ENCODE measurements at regions of chr17 and their contacts with region 1.

Region 1: GRCh38 chr17:45155029-45155428 is 6.6 kb upstream of the HEXIM2 start:
- DNase-seq: no peak
- H3K4me3 ChIP-seq: no peak overlapping the region
- H3K27ac ChIP-seq: no peak overlapping the region
- H3K4me1 ChIP-seq: peaks cover 25% of the 10 kb centered on the region
- CTCF ChIP-seq: no peak

Region 2: DNA sequence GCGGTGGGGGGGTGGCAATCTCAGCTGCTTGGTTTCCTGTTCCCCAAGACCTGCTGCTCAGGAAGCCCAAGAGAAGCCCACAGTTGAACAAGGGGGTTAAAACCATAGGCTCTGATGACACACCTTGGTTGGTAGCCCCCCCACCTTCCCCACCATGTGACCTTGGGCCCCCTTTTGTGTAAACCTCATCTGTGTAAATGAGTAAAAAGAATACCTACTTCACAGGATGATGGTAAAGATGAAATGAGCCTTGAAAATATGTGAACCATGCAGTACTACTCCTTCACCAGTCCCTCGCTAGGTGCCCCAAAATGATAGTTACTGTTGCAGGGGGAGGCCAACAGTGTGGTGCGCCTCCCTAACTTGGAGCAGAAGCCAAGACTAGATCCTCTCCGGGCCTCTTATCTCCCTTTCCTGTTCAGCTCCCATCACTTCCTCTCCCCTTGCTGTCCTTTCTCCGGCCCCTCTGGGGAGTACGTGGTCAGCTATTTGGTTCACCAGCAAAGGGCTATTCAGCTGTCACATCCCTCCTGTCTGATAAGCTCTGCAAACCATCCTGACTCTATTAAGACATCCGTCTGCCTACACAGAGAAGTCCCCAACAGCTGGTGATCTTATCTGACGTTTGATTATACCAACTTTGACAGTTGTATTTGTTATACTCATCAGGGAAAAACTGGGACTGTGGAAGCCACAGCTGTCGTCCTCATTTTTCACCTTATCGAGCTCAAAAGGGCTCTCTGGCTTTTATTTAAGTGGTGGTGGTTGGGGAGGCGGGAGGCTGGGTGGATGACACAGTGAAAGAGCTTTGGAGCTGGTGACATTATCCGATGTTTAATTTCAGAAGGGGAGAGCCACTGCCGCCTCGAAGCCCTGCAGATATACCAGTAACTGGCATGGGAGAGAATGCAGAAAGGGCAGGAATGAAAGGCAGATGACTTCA is 123.5 kb before region 1 on chr17:
- CTCF ChIA-PET with region 1: no interaction called
- POLR2A ChIA-PET with region 1: no interaction called
- intact Hi-C with region 1: no loop called
- DNase-seq: no peak
- H3K4me3 ChIP-seq: no peak overlapping the region
- H3K27ac ChIP-seq: no peak overlapping the region
- H3K4me1 ChIP-seq: no peaks in the 10 kb centered on the region
- CTCF ChIP-seq: no peak

Region 3: DNA sequence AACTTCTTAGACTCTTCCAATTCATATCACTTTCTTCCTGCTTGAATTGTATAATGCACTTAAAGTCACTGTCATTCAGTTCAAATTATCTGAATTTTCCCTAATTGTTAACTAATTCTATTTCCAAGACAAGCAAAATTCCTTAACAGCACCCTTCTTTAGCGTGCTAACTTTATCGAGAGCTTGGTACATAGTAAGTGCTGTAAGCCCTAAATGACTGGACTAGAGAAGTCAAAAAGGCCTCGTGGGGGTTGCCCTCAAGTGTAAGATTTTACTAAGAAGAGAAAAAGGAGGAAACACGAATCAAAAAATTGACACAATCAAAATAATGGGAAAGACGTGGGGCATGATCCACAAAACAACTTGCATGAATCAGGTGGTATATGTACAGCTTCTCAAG is 1026.9 kb after region 1 on chr17:
- CTCF ChIA-PET with region 1: no interaction called
- POLR2A ChIA-PET with region 1: interaction called, 12 read pairs
- intact Hi-C with region 1: no loop called
- DNase-seq: no peak
- H3K4me3 ChIP-seq: no peak overlapping the region
- H3K27ac ChIP-seq: no peak overlapping the region
- H3K4me1 ChIP-seq: peaks cover 54% of the 10 kb centered on the region
- CTCF ChIP-seq: no peak

Measured in OCI-LY7 (cell line).